ENCODE measurements at regions of chr4 and their contacts with region 1.

Region 1: DNA sequence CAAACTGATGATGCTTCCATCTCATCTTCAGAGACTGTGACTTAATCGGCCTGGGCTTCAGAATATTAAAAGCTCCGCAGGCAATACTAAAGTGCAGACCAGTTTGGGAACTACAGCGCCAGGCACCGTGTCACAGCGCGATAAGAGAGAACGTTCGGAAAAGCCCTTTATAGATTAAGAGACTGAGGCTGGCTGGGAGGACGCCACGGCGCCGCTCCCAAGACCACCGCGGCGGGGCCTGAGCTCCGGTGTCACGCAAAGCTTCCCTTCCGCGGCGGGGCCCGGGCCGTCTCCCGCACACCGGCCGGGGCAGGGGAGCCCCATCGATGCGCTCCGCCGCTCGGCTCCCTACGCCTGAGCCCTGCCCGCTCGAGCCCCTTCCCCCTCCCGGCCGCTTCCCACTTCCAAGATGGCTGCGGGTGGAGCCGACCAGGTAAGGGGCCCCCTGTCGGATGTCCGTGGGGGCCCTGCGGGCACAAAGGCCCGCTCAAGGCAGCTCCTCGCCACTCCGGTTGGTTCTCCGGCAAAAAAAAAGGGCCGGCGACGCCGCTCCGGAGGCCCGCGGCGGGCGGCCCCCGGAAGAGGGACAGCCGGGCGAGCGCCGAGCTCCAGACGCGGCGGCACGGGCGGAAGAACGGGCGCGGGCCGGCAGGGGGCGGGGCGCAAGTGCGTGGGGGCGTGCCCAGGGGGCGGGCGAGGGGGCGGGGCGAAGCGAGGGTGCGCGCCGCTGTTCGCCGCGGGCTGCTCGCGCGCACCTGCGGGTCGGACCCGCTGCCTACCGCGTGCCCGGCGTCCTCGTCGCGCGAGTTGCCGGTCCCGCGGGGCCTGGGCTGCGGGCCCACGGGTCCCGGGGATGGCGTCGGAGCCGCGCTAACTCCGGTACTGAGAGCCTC is at the start of gene TBC1D14:
- DNase-seq: peak; percentile 74
- ATAC-seq: peak; percentile 73
- H3K4me3 ChIP-seq: peak within 1 kb of the TSS; percentile 63 to 92 (median 83)
- H3K27ac ChIP-seq: peak within 1 kb of the TSS; percentile 99
- H3K4me1 ChIP-seq: peaks cover 74% of the 10 kb centered on the region
- H3K27me3 ChIP-seq: no peaks in the 10 kb centered on the region; a peak in 1 of 5 replicates
- CTCF ChIP-seq: peak; percentile 43
- EP300 ChIP-seq: 0 out of 4 replicates have a peak, but pooled peaks of 1 of the 2 experiments have one; percentile 30
- POLR2A ChIP-seq: peak in 1 of 2 experiments; percentile 58; a peak in 2 of 4 replicates
- RAD21 ChIP-seq: peak; percentile 38
- total RNA-seq, gene TBC1D14: 46.5 and 53.3 TPM in 2 replicates

Region 2: GRCh38 chr4:6892190-6892908 is 17.0 kb before region 1 on chr4:
- CTCF ChIA-PET with region 1: interaction called, 12 read pairs
- POLR2A ChIA-PET with region 1: interaction called, 215 read pairs
- in situ Hi-C with region 1: no loop called
- intact Hi-C with region 1: loop called (anchors 2 kb)
- DNase-seq: peak; percentile 94
- ATAC-seq: peak; percentile 79
- H3K4me3 ChIP-seq: peak overlapping the region; percentile 38 to 69 (median 52); a peak in 5 of 6 replicates
- H3K27ac ChIP-seq: peak overlapping the region; percentile 99
- H3K4me1 ChIP-seq: peaks cover 57% of the 10 kb centered on the region
- H3K27me3 ChIP-seq: no peaks in the 10 kb centered on the region
- CTCF ChIP-seq: peak; percentile 91
- EP300 ChIP-seq: peak in 1 of 2 experiments; percentile 62; a peak in 2 of 4 replicates
- POLR2A ChIP-seq: peak; percentile 57 to 79; a peak in 2 of 4 replicates
- RAD21 ChIP-seq: peak; percentile 90

Region 3: GRCh38 chr4:6926681-6927478 is 17.6 kb after region 1 on chr4:
- CTCF ChIA-PET with region 1: no interaction called
- POLR2A ChIA-PET with region 1: interaction called, 32 read pairs
- in situ Hi-C with region 1: no loop called
- intact Hi-C with region 1: loop called (anchors 2 kb)
- DNase-seq: peak; percentile 96
- ATAC-seq: peak; percentile 93
- H3K4me3 ChIP-seq: peak overlapping the region; percentile 7 to 31 (median 11); a peak in 2 of 6 replicates
- H3K27ac ChIP-seq: peak overlapping the region; percentile 63
- H3K4me1 ChIP-seq: peaks cover 91% of the 10 kb centered on the region
- H3K27me3 ChIP-seq: no peaks in the 10 kb centered on the region
- CTCF ChIP-seq: no peak
- EP300 ChIP-seq: no peak
- POLR2A ChIP-seq: peak in 1 of 2 experiments; percentile 49; a peak in 1 of 4 replicates
- RAD21 ChIP-seq: no peak

Region 4: GRCh38 chr4:6944301-6945051 is 35.2 kb after region 1 on chr4:
- CTCF ChIA-PET with region 1: no interaction called
- POLR2A ChIA-PET with region 1: interaction called, 3 read pairs
- in situ Hi-C with region 1: no loop called
- intact Hi-C with region 1: loop called (anchors 5 kb)
- DNase-seq: no peak
- ATAC-seq: no peak
- H3K4me3 ChIP-seq: no peak overlapping the region
- H3K27ac ChIP-seq: no peak overlapping the region
- H3K4me1 ChIP-seq: peaks cover 55% of the 10 kb centered on the region
- H3K27me3 ChIP-seq: no peaks in the 10 kb centered on the region
- CTCF ChIP-seq: no peak
- EP300 ChIP-seq: no peak
- POLR2A ChIP-seq: no peak
- RAD21 ChIP-seq: no peak

Region 5: DNA sequence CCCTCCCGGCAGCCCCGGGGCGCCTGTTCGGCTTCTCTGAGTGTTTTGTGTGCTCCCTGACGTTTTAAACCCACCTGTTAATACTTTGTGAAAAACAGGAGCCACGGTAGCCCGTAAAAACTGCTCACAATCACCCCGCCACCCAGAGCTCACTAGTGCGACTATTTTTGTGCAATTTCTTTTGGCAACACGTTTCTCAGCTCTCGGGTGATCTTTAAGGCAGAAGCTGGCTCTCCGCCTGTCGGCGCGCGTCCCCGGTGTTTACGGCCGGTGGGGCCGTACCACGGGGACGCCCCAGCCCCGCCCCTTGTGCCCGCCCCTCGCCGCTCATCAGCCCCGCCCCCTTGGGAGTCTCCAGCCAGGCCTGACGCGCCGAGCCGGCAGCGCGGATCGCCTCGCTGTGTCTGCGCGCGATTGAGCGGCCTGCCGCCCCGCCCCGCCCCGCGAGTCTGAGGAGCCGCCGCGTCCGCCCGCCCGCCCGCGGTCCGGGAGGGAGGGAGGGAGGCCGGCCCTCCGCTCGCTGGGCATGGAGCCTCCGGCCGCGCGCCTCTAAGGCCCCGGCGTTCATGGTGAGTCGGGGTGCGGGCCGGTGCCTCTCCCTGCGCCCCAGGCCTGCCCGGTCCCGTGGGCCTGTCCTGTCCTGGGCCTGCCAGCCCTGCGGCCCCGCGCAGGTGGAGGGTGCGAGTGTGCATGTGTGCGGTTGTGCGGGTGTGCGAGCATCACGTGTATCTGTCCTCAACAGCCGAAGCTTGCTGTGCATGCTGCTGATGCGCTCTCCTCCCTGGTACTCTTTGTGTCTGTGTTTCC is 77.7 kb after region 1 on chr4:
- CTCF ChIA-PET with region 1: no interaction called
- POLR2A ChIA-PET with region 1: interaction called, 18 read pairs
- in situ Hi-C with region 1: no loop called
- intact Hi-C with region 1: loop called (anchors 2 kb)
- DNase-seq: peak; percentile 81
- ATAC-seq: peak; percentile 84
- H3K4me3 ChIP-seq: peak overlapping the region; percentile 82 to 92 (median 88)
- H3K27ac ChIP-seq: peak overlapping the region; percentile 80
- H3K4me1 ChIP-seq: peaks cover 53% of the 10 kb centered on the region
- H3K27me3 ChIP-seq: no peaks in the 10 kb centered on the region; a peak in 1 of 5 replicates
- CTCF ChIP-seq: peak; percentile 23; the same call in 1 of the 2 replicates
- EP300 ChIP-seq: no peak; a peak in 1 of 4 replicates
- POLR2A ChIP-seq: peak; percentile 48 to 62; a peak in 2 of 4 replicates
- RAD21 ChIP-seq: no peak

Region 6: GRCh38 chr4:7067452-7068278 is 158.3 kb after region 1 on chr4 and contains the start of gene GRPEL1:
- CTCF ChIA-PET with region 1: interaction called, 4 read pairs
- POLR2A ChIA-PET with region 1: interaction called, 15 read pairs
- in situ Hi-C with region 1: loop called (anchors 10 kb)
- intact Hi-C with region 1: no loop called
- DNase-seq: peak; percentile 99
- ATAC-seq: peak; percentile 94
- H3K4me3 ChIP-seq: peak within 1 kb of the TSS; percentile 79 to 97 (median 85)
- H3K27ac ChIP-seq: peak within 1 kb of the TSS; percentile 91
- H3K4me1 ChIP-seq: peaks cover 60% of the 10 kb centered on the region
- H3K27me3 ChIP-seq: no peaks in the 10 kb centered on the region; a peak in 1 of 5 replicates
- CTCF ChIP-seq: no peak
- EP300 ChIP-seq: 0 out of 4 replicates have a peak, but pooled peaks of 1 of the 2 experiments have one; percentile 13
- POLR2A ChIP-seq: peak in 1 of 2 experiments; percentile 99; a peak in 2 of 4 replicates
- RAD21 ChIP-seq: peak; percentile 19; the same call in 1 of the 2 replicates
- total RNA-seq, gene GRPEL1: 141 and 213 TPM in 2 replicates

Measured in HepG2 (cell line).